ENCODE measurements at regions of chr12 and their contacts with region 1.

Region 1: DNA sequence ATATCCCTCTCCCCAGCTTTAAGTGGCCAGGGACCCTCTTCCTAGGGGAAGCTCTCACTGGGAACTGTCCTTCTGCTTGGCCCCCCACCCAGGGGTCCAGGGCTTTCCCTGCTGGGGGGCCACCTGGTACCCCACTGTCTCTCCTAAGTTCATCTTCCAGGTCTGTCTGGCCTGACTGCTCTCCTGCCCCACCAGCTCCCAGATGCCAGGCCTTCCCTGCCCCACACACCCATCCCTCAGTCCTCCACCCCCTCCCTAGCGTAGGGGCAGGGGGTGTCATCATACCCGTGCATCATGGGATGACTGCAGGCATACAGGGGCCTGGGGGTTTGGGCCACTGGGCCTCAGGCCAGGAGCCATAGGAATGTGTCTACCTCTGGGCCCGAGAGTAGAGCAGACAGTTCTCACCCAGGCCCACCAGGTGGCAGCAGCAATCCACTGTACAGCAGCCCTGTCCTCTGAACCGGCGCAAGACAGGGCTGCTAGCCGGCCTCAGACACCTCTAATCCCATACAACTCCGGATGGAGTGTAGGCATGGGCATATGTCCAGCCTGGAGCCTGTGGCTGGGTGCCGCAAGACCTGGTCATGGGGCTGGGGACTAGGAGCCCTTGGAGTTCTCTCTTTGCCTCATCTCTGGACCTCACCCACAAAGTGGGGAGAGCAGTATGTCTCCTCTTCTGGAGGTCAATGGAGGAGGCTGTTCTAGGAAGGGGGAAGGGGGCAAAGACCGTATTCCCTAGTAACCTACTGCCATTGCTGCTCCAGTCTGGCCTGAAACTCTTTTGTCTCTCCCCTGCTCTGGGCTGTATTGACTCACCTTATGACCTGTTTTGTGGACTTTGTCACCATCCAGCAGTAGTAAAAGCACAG is 10.0 kb upstream of the SMARCD1 start:
- DNase-seq: peak; percentile 81 to 91 (median 84)
- ATAC-seq: peak; percentile 86 to 91 (median 89)
- H3K4me3 ChIP-seq: no peak overlapping the region
- H3K27ac ChIP-seq: no peak overlapping the region
- H3K4me1 ChIP-seq: peaks cover 0 to 13% (median 3%) of the 10 kb centered on the region in 12 donors
- H3K27me3 ChIP-seq: no peaks in the 10 kb centered on the region
- CTCF ChIP-seq: peak; percentile 87 to 96 (median 93)
- POLR2A ChIP-seq: no peak

Region 2: GRCh38 chr12:49776413-49776812 is 298.8 kb before region 1 on chr12:
- intact Hi-C with region 1: loop called in 1 of 10 experiments (anchors 10 kb)
- DNase-seq: peak; percentile 52 to 79 (median 71)
- ATAC-seq: peak; percentile 61 to 94 (median 89)
- H3K4me3 ChIP-seq: no peak overlapping the region
- H3K27ac ChIP-seq: no peak overlapping the region
- H3K4me1 ChIP-seq: peaks cover 0 to 7% (median 0%) of the 10 kb centered on the region in 12 donors
- H3K27me3 ChIP-seq: no peaks in the 10 kb centered on the region
- CTCF ChIP-seq: peak; percentile 63 to 85 (median 80)
- POLR2A ChIP-seq: no peak

Region 3: DNA sequence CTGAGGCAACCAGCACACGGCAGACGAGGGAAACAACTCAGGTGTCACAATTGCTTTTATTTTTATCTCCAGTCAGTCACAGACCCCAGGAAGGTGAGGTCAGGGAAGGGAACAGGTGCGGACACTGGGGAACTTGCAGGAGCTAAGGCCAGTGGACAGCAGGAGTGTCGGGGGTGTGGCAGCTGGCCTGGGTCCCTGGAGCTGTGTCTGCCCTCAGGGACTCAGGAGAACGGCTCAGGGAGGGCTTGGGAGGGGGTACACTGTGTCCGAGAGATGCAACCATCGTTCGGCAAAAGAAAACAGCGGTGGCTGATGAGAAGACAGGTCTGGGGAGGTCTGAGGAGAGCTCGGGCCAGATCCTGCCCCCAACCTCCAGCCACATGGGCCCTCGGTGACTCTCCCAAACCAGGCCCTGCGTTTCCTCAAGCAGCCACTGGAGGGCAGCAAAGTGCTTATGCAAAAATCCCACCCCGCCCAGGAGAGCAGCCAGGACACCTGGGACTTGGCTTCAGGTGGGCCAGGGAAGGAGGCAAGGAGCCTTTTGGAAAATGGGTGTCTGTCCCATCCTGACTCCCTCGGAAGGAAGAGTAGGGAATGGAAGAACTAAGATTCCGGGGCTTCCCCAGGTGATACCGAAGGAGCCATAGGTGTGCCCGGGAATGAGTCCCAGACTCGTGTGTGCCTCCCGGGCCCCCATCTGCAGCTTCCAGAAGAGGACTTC is 208.2 kb before region 1 on chr12:
- intact Hi-C with region 1: loop called in 6 of 10 experiments (anchors 5 kb)
- DNase-seq: peak; percentile 67 to 79 (median 73)
- ATAC-seq: peak in 2 of 4 donors; percentile 17
- H3K4me3 ChIP-seq: no peak overlapping the region
- H3K27ac ChIP-seq: no peak overlapping the region
- H3K4me1 ChIP-seq: peaks cover 4 to 37% (median 29%) of the 10 kb centered on the region in 12 donors
- H3K27me3 ChIP-seq: peaks cover 0 to 6% (median 0%) of the 10 kb centered on the region in 9 donors
- CTCF ChIP-seq: peak; percentile 94 to 99 (median 98)
- POLR2A ChIP-seq: no peak

Region 4: GRCh38 chr12:49954863-49955830 is 120.0 kb before region 1 on chr12:
- intact Hi-C with region 1: no loop called
- DNase-seq: no peak
- ATAC-seq: peak in 1 of 4 donors; percentile 36
- H3K4me3 ChIP-seq: peak overlapping the region in 1 of 12 donors; percentile 4
- H3K27ac ChIP-seq: no peak overlapping the region
- H3K4me1 ChIP-seq: peaks cover 0 to 18% (median 1%) of the 10 kb centered on the region in 12 donors
- H3K27me3 ChIP-seq: peaks cover 0 to 68% (median 12%) of the 10 kb centered on the region in 9 donors
- CTCF ChIP-seq: no peak
- POLR2A ChIP-seq: no peak

Region 5: GRCh38 chr12:50038336-50038735 is 36.8 kb before region 1 on chr12:
- intact Hi-C with region 1: loop called in 3 of 10 experiments (anchors 1 to 5 kb)
- DNase-seq: no peak
- ATAC-seq: no peak
- H3K4me3 ChIP-seq: no peak overlapping the region
- H3K27ac ChIP-seq: no peak overlapping the region
- H3K4me1 ChIP-seq: peaks cover 0 to 8% (median 0%) of the 10 kb centered on the region in 12 donors
- H3K27me3 ChIP-seq: peaks cover 0 to 7% (median 0%) of the 10 kb centered on the region in 9 donors
- CTCF ChIP-seq: no peak
- POLR2A ChIP-seq: no peak

Region 6: DNA sequence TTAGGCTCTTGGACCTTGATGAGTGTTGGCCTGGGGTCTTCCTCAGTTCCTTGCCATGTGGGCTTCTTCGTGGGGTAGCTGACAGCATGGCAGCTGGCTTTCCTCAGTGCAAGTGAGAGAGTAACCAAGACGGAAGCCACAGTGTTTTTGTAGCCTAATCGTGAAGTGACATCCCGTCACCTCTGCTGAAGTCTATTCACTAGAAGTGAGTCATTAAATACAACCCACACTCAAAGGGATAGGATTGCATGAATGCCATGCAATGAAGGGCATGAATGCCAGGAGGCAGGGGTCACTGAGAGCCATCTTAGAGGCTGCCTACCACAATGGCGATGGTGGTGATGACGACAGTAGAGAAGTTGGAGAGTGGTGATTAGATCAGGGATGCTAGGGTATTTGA is 31.3 kb before region 1 on chr12:
- intact Hi-C with region 1: loop called in 3 of 10 experiments (anchors 1 to 5 kb)
- DNase-seq: no peak
- ATAC-seq: no peak
- H3K4me3 ChIP-seq: no peak overlapping the region
- H3K27ac ChIP-seq: no peak overlapping the region
- H3K4me1 ChIP-seq: peaks cover 0 to 5% (median 0%) of the 10 kb centered on the region in 12 donors
- H3K27me3 ChIP-seq: peaks cover 0 to 4% (median 0%) of the 10 kb centered on the region in 9 donors
- CTCF ChIP-seq: no peak
- POLR2A ChIP-seq: no peak

Region 7: DNA sequence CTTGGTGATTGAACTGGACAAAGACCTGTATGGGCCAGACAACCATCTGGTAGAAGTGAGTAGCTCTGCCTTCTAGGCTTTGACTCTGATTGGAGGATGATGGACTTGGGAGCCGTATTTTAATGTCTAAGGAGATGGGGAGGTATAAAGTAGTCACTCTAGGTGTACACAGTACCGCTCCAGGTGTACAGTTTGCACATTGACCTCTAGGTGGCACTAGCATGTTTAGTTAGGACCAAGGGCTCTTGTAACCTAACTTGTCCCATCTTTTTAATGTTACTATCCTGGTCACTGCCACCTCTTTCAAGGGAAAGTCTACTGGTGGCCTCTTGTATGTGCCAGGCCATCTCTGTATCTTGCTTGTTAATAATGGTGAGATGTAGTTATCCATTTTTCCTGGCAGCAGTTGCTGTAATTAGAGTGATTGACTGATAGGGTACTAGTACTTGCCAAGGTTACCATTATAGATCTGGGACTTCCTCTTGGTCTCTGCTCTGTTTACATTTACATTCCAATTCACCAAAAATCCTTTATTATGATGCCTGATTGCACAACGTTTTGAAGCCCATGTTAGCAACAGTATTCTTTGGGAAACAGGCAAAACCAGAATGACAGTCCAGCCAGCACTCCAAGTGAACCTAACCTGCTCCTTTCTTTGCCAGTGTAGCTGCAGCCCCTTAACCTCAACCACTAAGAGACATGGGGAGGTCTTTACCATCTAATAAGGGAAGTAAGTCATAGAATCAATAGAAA is 13.6 kb after region 1 on chr12:
- intact Hi-C with region 1: no loop called
- DNase-seq: no peak
- ATAC-seq: peak in 1 of 4 donors; percentile 19
- H3K4me3 ChIP-seq: no peak overlapping the region
- H3K27ac ChIP-seq: no peak overlapping the region
- H3K4me1 ChIP-seq: peaks cover 0 to 26% (median 12%) of the 10 kb centered on the region in 12 donors
- H3K27me3 ChIP-seq: no peaks in the 10 kb centered on the region
- CTCF ChIP-seq: peak; percentile 62 to 83 (median 80)
- POLR2A ChIP-seq: no peak

Region 8: GRCh38 chr12:50151047-50151687 is 76.0 kb after region 1 on chr12:
- intact Hi-C with region 1: no loop called
- DNase-seq: no peak
- ATAC-seq: peak in 1 of 4 donors; percentile 33
- H3K4me3 ChIP-seq: no peak overlapping the region
- H3K27ac ChIP-seq: no peak overlapping the region
- H3K4me1 ChIP-seq: peaks cover 0 to 13% (median 0%) of the 10 kb centered on the region in 12 donors
- H3K27me3 ChIP-seq: no peaks in the 10 kb centered on the region
- CTCF ChIP-seq: no peak
- POLR2A ChIP-seq: no peak

Region 9: GRCh38 chr12:50174971-50175715 is 100.0 kb after region 1 on chr12:
- intact Hi-C with region 1: loop called in 7 of 10 experiments (anchors 1 to 5 kb)
- DNase-seq: peak in 1 of 5 donors; percentile 22
- ATAC-seq: peak in 1 of 4 donors; percentile 46
- H3K4me3 ChIP-seq: no peak overlapping the region
- H3K27ac ChIP-seq: no peak overlapping the region
- H3K4me1 ChIP-seq: no peaks in the 10 kb centered on the region
- H3K27me3 ChIP-seq: no peaks in the 10 kb centered on the region
- CTCF ChIP-seq: peak; percentile 56 to 83 (median 68)
- POLR2A ChIP-seq: no peak

Region 10: DNA sequence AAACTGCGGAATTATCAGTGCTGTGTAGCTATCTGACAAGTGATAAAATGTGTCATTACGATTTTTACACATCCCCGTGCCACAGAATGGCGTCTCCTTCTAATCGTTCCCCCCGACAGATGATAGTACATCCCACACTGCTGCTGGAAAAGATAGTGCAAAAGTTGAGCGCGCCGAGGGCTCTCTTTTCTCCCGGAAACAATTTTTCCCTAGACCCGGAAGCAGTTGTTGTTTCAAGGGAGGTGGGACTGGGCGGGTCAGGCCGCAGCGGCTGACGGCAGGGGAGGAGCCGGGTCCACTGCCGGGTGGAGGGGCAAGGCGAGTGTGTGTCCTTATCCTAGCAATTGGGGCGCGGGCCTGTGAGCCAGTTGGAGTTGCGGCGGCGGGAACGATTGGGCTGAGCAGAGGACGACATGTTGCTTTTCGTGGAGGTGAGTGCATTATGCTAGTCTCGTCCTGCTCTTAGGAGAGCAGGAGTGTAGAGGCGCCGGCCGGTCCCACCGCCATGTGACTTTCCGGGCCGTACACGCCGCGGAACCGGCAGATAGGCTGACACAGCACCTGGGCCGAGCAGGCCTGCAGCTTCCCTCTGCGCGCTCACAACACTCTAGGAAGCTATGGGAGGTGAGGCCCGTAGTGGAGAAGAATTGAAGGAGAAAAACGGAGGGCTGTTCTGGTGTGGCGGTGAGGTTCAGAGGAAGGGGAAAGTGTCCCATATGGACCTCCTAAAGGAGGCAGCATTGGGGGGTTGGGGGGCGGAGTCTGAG is 325.6 kb after region 1 on chr12 and contains the start of gene LARP4:
- intact Hi-C with region 1: loop called in 1 of 10 experiments (anchors 10 kb)
- DNase-seq: peak; percentile 93 to 95 (median 94)
- ATAC-seq: peak; percentile 96 to 99 (median 98)
- H3K4me3 ChIP-seq: peak within 1 kb of the TSS; percentile 49 to 96 (median 84)
- H3K27ac ChIP-seq: peak within 1 kb of the TSS; percentile 83 to 96 (median 91)
- H3K4me1 ChIP-seq: peaks cover 0 to 29% (median 18%) of the 10 kb centered on the region in 12 donors
- H3K27me3 ChIP-seq: no peaks in the 10 kb centered on the region
- CTCF ChIP-seq: no peak
- POLR2A ChIP-seq: peak in 1 of 2 donors; percentile 86
- total RNA-seq, gene LARP4: 38.0 to 77.1 (median 51.6) TPM

Region 11: GRCh38 chr12:50581201-50582184 is 506.3 kb after region 1 on chr12:
- intact Hi-C with region 1: no loop called
- DNase-seq: no peak
- ATAC-seq: peak in 2 of 4 donors; percentile 22 to 67
- H3K4me3 ChIP-seq: no peak overlapping the region
- H3K27ac ChIP-seq: no peak overlapping the region
- H3K4me1 ChIP-seq: peaks cover 0 to 33% (median 11%) of the 10 kb centered on the region in 12 donors
- H3K27me3 ChIP-seq: no peaks in the 10 kb centered on the region
- CTCF ChIP-seq: no peak
- POLR2A ChIP-seq: no peak